Gastrocnemius medialis (tissue), 4 donors: ENCODE measurements at regions of chr5 and their contacts with region 1.

Region 1: DNA sequence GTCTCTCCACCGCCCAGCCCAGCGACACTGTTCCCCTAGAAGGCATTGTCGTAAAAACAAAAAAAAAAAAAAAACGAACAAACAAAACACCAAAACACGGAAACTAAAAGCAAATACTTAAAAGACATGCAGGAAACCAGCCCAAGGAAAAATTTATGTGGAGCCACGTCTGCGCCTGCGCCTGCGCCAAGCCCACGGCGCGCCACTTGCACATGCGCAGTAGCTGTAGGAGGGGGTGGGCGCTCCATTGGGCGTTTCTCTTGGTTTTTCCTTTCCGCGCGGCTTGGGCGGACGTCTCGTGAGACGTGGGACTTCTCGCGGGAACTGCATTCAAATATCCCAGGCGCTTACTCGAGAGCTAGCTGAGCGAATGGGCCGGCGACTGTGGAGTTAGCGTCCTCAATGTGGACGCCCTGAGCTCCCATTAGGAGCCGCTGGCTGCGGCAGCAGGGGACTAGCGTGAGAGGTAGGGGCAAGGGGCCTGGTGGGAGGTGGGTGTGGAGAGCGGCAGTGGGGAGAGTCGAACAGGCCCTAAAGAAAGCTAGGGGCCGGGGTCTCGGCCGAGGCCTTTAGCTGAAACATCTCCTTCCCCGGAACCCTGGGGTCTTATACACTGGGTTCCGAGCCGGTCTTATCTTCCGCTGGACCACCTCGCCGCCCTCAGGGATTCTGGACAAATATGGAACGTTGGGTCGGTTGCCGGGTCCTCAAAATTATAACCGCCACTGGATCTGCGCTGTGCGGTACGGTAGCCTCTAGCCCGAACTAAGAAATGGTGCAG is at the start of gene SPDL1:
- DNase-seq: peak; percentile 86 to 91
- ATAC-seq: peak; percentile 95 to 98
- H3K4me3 ChIP-seq: peak within 1 kb of the TSS; percentile 63 to 98 (median 91)
- H3K27ac ChIP-seq: peak within 1 kb of the TSS; percentile 70 to 82 (median 78)
- H3K4me1 ChIP-seq: peaks cover 0 to 4% of the 10 kb centered on the region in 2 donors
- H3K27me3 ChIP-seq: no peaks in the 10 kb centered on the region
- CTCF ChIP-seq: no peak
- POLR2A ChIP-seq: peak in 1 of 2 donors; percentile 61
- total RNA-seq, gene SPDL1: 0.78 to 4.6 (median 3.2) TPM

Region 2: GRCh38 chr5:168486136-168486879 is 1097.3 kb before region 1 on chr5 and contains the start of gene RARS1:
- in situ Hi-C with region 1: no loop called
- intact Hi-C with region 1: loop called (anchors 10 kb)
- DNase-seq: peak; percentile 84 to 88
- ATAC-seq: peak; percentile 98 to 99
- H3K4me3 ChIP-seq: peak within 1 kb of the TSS; percentile 70 to 97 (median 91)
- H3K27ac ChIP-seq: peak within 1 kb of the TSS; percentile 69 to 77 (median 71)
- H3K4me1 ChIP-seq: peaks cover 8 to 10% of the 10 kb centered on the region in 2 donors
- H3K27me3 ChIP-seq: no peaks in the 10 kb centered on the region
- CTCF ChIP-seq: peak; percentile 81 to 95 (median 91)
- POLR2A ChIP-seq: peak; percentile 54 to 76
- total RNA-seq, gene RARS1: 45.9 to 65.5 (median 52.7) TPM

Region 3: GRCh38 chr5:168579488-168580226 is 1004.0 kb before region 1 on chr5:
- in situ Hi-C with region 1: no loop called
- intact Hi-C with region 1: loop called (anchors 10 kb)
- DNase-seq: peak; percentile 98 to 99
- ATAC-seq: peak; percentile 95 to 96
- H3K4me3 ChIP-seq: peak overlapping the region; percentile 82 to 100 (median 90)
- H3K27ac ChIP-seq: peak overlapping the region; percentile 95 to 99 (median 96)
- H3K4me1 ChIP-seq: peaks cover 17 to 34% of the 10 kb centered on the region in 2 donors
- H3K27me3 ChIP-seq: no peaks in the 10 kb centered on the region
- CTCF ChIP-seq: no peak
- POLR2A ChIP-seq: peak; percentile 95 to 96

Region 4: GRCh38 chr5:169302491-169303118 is 281.0 kb before region 1 on chr5:
- in situ Hi-C with region 1: no loop called
- intact Hi-C with region 1: loop called (anchors 10 kb)
- DNase-seq: peak; percentile 25 to 47
- ATAC-seq: peak in 1 of 2 donors; percentile 42
- H3K4me3 ChIP-seq: no peak overlapping the region
- H3K27ac ChIP-seq: no peak overlapping the region
- H3K4me1 ChIP-seq: peaks cover 0 to 6% of the 10 kb centered on the region in 2 donors
- H3K27me3 ChIP-seq: peaks cover 0 to 14% (median 4%) of the 10 kb centered on the region in 3 donors
- CTCF ChIP-seq: peak; percentile 53 to 85 (median 61)
- POLR2A ChIP-seq: no peak